ENCODE measurements at regions of chr7 and their contacts with region 1.

Region 1: GRCh38 chr7:4641667-4642467 is 40.2 kb upstream of the FOXK1 start:
- DNase-seq: peak; percentile 98 to 99
- ATAC-seq: peak; percentile 81 to 92 (median 87)
- H3K4me3 ChIP-seq: peak overlapping the region; percentile 89
- H3K4me3 Mint-ChIP-seq: peak overlapping the region; percentile 94
- H3K27ac ChIP-seq: peak overlapping the region; percentile 96
- H3K27ac Mint-ChIP-seq: peak overlapping the region; percentile 93 to 95
- H3K4me1 ChIP-seq: peaks cover 17% of the 10 kb centered on the region
- H3K4me1 Mint-ChIP-seq: peaks cover 9 to 15% of the 10 kb centered on the region in 2 donors
- H3K27me3 ChIP-seq: no peaks in the 10 kb centered on the region
- H3K27me3 Mint-ChIP-seq: peaks cover 0 to 6% of the 10 kb centered on the region in 2 donors
- CTCF ChIP-seq: peak; percentile 33

Region 2: DNA sequence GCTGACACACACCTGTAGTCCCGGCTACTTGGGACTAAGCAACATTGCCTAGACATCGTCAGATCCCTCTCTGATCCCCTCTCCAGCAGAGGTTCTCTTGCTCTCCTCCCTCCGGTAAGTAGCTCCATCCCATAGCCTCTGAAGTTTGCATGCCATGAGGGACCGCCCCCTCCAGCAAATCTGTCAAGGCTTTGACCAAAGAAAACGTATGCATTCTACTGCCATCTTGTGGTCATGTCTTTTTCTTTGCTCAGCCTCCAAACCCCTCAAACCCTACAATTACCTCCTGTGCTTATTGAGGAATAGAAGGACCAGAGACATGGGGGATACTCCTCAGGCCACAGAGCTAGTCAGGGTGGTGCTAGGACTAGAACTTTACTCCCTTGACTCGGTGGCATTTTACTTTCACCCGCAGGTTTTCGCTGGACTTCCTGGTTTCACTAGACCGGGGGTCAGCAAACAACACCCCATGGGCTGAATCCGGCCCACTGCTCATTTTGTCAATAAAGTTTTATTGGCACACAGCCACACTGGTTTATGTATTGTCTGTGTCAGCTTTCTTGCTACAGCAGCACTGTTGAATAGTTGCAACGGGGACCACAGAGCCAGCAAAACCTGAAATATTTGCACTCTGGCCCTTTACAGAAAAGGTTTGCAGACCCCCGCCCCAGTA is 162.4 kb before region 1 on chr7:
- intact Hi-C with region 1: no loop called
- DNase-seq: peak in 1 of 2 donors; percentile 20
- ATAC-seq: no peak
- H3K4me3 ChIP-seq: no peak overlapping the region
- H3K4me3 Mint-ChIP-seq: no peak overlapping the region
- H3K27ac ChIP-seq: no peak overlapping the region
- H3K27ac Mint-ChIP-seq: no peak overlapping the region
- H3K4me1 ChIP-seq: no peaks in the 10 kb centered on the region
- H3K4me1 Mint-ChIP-seq: no peaks in the 10 kb centered on the region
- H3K27me3 ChIP-seq: no peaks in the 10 kb centered on the region
- H3K27me3 Mint-ChIP-seq: peaks cover 0 to 6% of the 10 kb centered on the region in 2 donors
- CTCF ChIP-seq: no peak

Region 3: GRCh38 chr7:4655311-4655710 is 13.4 kb after region 1 on chr7:
- intact Hi-C with region 1: no loop called
- DNase-seq: no peak
- ATAC-seq: no peak
- H3K4me3 ChIP-seq: no peak overlapping the region
- H3K4me3 Mint-ChIP-seq: no peak overlapping the region
- H3K27ac ChIP-seq: no peak overlapping the region
- H3K27ac Mint-ChIP-seq: no peak overlapping the region
- H3K4me1 ChIP-seq: no peaks in the 10 kb centered on the region
- H3K4me1 Mint-ChIP-seq: peaks cover 0 to 6% of the 10 kb centered on the region in 2 donors
- H3K27me3 ChIP-seq: peaks cover 3% of the 10 kb centered on the region
- H3K27me3 Mint-ChIP-seq: peaks cover 0 to 9% of the 10 kb centered on the region in 2 donors
- CTCF ChIP-seq: no peak

Region 4: GRCh38 chr7:4775250-4775847 is 133.5 kb after region 1 on chr7 and contains the start of gene AP5Z1:
- intact Hi-C with region 1: loop called (anchors 5 kb)
- DNase-seq: peak; percentile 96 to 99
- ATAC-seq: peak; percentile 86 to 95 (median 89)
- H3K4me3 ChIP-seq: peak within 1 kb of the TSS; percentile 88
- H3K4me3 Mint-ChIP-seq: peak within 1 kb of the TSS; percentile 98
- H3K27ac ChIP-seq: peak within 1 kb of the TSS; percentile 97
- H3K27ac Mint-ChIP-seq: peak within 1 kb of the TSS; percentile 98 to 100
- H3K4me1 ChIP-seq: peaks cover 27% of the 10 kb centered on the region
- H3K4me1 Mint-ChIP-seq: peaks cover 31 to 41% of the 10 kb centered on the region in 2 donors
- H3K27me3 ChIP-seq: no peaks in the 10 kb centered on the region
- H3K27me3 Mint-ChIP-seq: no peaks in the 10 kb centered on the region
- CTCF ChIP-seq: no peak
- total RNA-seq, gene AP5Z1: 140 to 156 (median 143) TPM

Measured in natural killer cell (primary cell).